PC-3 (cell line): ENCODE measurements at regions of chr3 and their contacts with region 1.

Region 1: DNA sequence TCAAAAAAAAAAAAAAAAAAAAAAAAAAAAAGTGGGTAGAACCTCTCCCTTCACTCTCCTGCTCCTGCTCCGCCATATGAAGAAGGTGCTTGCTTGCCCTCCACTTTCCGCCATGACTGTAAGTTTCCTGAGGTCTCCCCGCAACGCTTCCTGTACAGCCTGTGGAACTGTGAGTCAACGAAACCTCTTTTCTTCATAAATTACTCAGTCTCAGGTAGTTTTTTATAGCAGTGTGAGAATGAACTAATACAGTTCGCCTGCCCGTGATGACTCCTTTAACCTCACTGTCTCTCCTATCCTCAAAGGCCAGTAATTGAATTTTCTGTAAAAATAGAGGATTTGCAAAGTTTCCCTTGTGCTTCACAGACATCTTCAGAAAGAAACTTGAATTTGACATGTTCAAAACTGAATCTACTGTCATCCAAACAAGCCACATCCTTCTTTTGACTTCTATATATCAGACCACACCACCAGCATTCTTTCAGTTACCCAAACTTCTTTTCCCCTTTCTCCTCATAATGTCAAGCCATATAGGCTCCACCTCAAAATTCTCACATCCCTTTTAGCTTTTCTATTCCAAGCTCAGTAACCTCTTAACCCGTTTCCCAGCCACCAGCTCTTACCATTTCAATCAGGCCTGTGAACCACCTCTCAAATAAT is 44.3 kb downstream of the P2RY1 start:
- DNase-seq: no peak
- ATAC-seq: no peak
- H3K4me3 ChIP-seq: no peak overlapping the region
- H3K27ac ChIP-seq: no peak overlapping the region
- H3K4me1 ChIP-seq: 0 out of 2 replicates have a peak, but pooled peaks cover 4% of the 10 kb centered on the region
- H3K27me3 ChIP-seq: no peaks in the 10 kb centered on the region
- CTCF ChIP-seq: no peak

Region 2: DNA sequence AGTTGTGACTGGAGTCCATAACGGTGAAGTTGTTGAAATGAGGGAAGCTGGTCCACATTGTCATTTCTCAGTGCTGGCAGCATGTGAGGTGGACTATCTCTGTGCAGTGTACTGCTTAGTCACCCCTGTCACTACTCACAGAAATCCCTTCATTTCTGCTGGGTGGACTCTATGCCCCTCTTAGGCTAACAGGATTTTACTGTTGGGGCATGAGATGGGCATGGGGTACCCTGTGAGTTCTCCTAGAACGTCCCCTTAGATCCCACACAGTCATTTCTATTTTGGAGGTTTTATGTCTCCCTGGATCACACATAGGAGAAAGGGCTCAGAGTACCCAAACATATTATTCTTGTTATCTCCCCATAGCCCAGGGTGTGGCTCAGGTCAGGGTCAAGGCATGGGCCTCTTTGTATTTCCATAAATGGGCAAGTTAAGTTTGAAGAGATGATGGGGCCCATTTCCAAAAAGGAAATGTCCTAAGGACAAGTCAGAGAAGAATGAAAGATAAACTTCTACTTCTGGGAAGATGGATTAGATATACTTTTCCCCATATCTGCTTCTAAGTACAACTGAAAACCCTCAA is 29.2 kb before region 1 on chr3:
- CTCF ChIA-PET with region 1: no interaction called
- POLR2A ChIA-PET with region 1: no interaction called
- intact Hi-C with region 1: no loop called
- DNase-seq: no peak
- ATAC-seq: no peak
- H3K4me3 ChIP-seq: no peak overlapping the region
- H3K27ac ChIP-seq: no peak overlapping the region
- H3K4me1 ChIP-seq: no peaks in the 10 kb centered on the region
- H3K27me3 ChIP-seq: no peaks in the 10 kb centered on the region
- CTCF ChIP-seq: no peak

Region 3: DNA sequence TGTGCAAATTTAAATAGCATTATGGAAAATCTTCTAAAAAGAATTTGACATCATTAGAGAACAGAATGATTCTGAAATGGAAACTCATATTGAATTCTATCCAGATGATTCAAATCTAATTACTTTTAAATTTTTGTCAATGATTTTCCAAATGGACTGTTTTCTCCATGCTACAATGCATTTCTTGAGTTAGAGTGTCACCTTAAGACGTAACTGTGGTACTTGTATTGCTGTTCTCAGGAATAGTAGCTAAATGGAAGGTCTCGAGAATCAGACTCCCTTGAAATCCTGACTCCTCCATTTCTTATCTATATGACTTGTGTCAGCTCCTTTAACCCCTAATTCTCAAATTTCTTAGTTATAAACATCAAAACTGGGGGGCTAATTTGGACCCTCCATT is 58.0 kb after region 1 on chr3:
- CTCF ChIA-PET with region 1: no interaction called
- POLR2A ChIA-PET with region 1: no interaction called
- intact Hi-C with region 1: loop called (anchors 5 kb)
- DNase-seq: no peak
- ATAC-seq: no peak
- H3K4me3 ChIP-seq: no peak overlapping the region
- H3K27ac ChIP-seq: no peak overlapping the region
- H3K4me1 ChIP-seq: peaks cover 5% of the 10 kb centered on the region
- H3K27me3 ChIP-seq: no peaks in the 10 kb centered on the region
- CTCF ChIP-seq: peak; percentile 31; the same call in 1 of the 2 replicates

Region 4: GRCh38 chr3:152969561-152970240 is 90.4 kb after region 1 on chr3:
- CTCF ChIA-PET with region 1: no interaction called
- POLR2A ChIA-PET with region 1: no interaction called
- intact Hi-C with region 1: loop called (anchors 2 kb)
- DNase-seq: peak; percentile 93
- ATAC-seq: peak; percentile 91
- H3K4me3 ChIP-seq: peak overlapping the region; percentile 6; the same call in 1 of the 2 replicates
- H3K27ac ChIP-seq: peak overlapping the region; percentile 14; the same call in 1 of the 2 replicates
- H3K4me1 ChIP-seq: peaks cover 44% of the 10 kb centered on the region
- H3K27me3 ChIP-seq: no peaks in the 10 kb centered on the region
- CTCF ChIP-seq: no peak